CD8-positive, alpha-beta T cell (primary cell): ENCODE measurements at regions of chr19 and their contacts with region 1.

Region 1: GRCh38 chr19:18683213-18683939 is at the start of gene CRTC1:
- DNase-seq: peak; percentile 90 to 97 (median 95)
- ATAC-seq: peak; percentile 90
- H3K4me3 ChIP-seq: peak within 1 kb of the TSS; percentile 63 to 91
- H3K4me3 Mint-ChIP-seq: peak within 1 kb of the TSS; percentile 87
- H3K27ac ChIP-seq: peak within 1 kb of the TSS; percentile 65 to 67
- H3K27ac Mint-ChIP-seq: peak within 1 kb of the TSS; percentile 82
- H3K4me1 ChIP-seq: peaks cover 20% of the 10 kb centered on the region
- H3K4me1 Mint-ChIP-seq: peaks cover 33% of the 10 kb centered on the region
- H3K27me3 ChIP-seq: no peaks in the 10 kb centered on the region
- H3K27me3 Mint-ChIP-seq: no peaks in the 10 kb centered on the region
- CTCF ChIP-seq: no peak
- total RNA-seq, gene CRTC1: 7.1 to 7.5 TPM

Region 2: GRCh38 chr19:18503971-18504885 is 179.1 kb before region 1 on chr19:
- CTCF ChIA-PET with region 1: no interaction called
- POLR2A ChIA-PET with region 1: no interaction called
- intact Hi-C with region 1: no loop called
- DNase-seq: no peak
- ATAC-seq: no peak
- H3K4me3 ChIP-seq: no peak overlapping the region
- H3K4me3 Mint-ChIP-seq: no peak overlapping the region
- H3K27ac ChIP-seq: peak overlapping the region in 1 of 2 experiments; percentile 79
- H3K27ac Mint-ChIP-seq: no peak overlapping the region
- H3K4me1 ChIP-seq: peaks cover 94% of the 10 kb centered on the region
- H3K4me1 Mint-ChIP-seq: peaks cover 91% of the 10 kb centered on the region
- H3K27me3 ChIP-seq: no peaks in the 10 kb centered on the region
- H3K27me3 Mint-ChIP-seq: no peaks in the 10 kb centered on the region
- CTCF ChIP-seq: no peak

Region 3: DNA sequence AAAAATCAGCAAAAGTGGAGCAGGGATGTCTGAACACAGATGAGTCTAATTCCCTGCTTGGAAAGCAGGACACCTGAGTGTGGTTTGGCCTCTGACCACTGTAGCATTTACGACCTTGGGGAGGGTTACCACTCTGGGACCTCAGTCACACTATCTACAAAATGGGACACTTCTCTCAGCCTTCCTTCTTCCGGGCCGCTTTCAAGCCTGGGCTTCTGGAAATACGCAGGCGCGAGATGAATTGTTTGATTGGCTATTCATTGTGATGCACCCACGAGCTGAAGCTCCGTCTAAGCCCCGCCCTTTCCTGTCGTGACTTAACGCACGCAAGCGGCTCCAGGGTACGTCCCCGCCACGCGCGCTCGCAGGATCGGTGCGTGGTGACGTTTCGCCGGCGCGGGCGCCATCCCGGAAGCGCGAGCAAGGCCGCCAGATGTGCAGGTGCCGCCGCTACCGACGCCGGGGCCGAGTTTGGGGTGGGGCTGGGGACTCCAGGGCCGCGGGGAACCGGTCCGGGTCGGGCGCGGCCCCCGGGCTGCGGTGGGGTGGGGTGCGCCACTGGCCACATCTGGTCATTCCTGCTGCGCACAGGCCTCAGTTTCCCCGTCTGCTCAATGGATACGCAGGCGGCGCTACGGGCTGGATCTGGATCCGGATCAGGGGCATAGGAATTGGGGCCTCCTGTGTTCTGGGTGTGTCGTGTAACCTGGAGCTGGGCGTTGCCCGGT is 125.7 kb before region 1 on chr19 and contains the start of gene KXD1:
- CTCF ChIA-PET with region 1: no interaction called
- POLR2A ChIA-PET with region 1: no interaction called
- intact Hi-C with region 1: loop called in 1 of 2 experiments (anchors 1 kb)
- DNase-seq: peak; percentile 92 to 100 (median 97)
- ATAC-seq: peak; percentile 99
- H3K4me3 ChIP-seq: peak within 1 kb of the TSS; percentile 98 to 99
- H3K4me3 Mint-ChIP-seq: peak within 1 kb of the TSS; percentile 91
- H3K27ac ChIP-seq: peak within 1 kb of the TSS; percentile 96 to 99
- H3K27ac Mint-ChIP-seq: peak within 1 kb of the TSS; percentile 90
- H3K4me1 ChIP-seq: peaks cover 20% of the 10 kb centered on the region
- H3K4me1 Mint-ChIP-seq: peaks cover 20% of the 10 kb centered on the region
- H3K27me3 ChIP-seq: no peaks in the 10 kb centered on the region
- H3K27me3 Mint-ChIP-seq: no peaks in the 10 kb centered on the region
- CTCF ChIP-seq: no peak
- total RNA-seq, gene KXD1: 64.1 to 76.1 TPM

Region 4: GRCh38 chr19:18620916-18621315 is 62.5 kb before region 1 on chr19:
- CTCF ChIA-PET with region 1: no interaction called
- POLR2A ChIA-PET with region 1: no interaction called
- intact Hi-C with region 1: loop called in 1 of 2 experiments (anchors 2 kb)
- DNase-seq: no peak
- ATAC-seq: no peak
- H3K4me3 ChIP-seq: no peak overlapping the region
- H3K4me3 Mint-ChIP-seq: no peak overlapping the region
- H3K27ac ChIP-seq: no peak overlapping the region
- H3K27ac Mint-ChIP-seq: no peak overlapping the region
- H3K4me1 ChIP-seq: no peaks in the 10 kb centered on the region
- H3K4me1 Mint-ChIP-seq: no peaks in the 10 kb centered on the region
- H3K27me3 ChIP-seq: no peaks in the 10 kb centered on the region
- H3K27me3 Mint-ChIP-seq: peaks cover 15% of the 10 kb centered on the region
- CTCF ChIP-seq: no peak

Region 5: GRCh38 chr19:18700501-18701249 is 17.3 kb after region 1 on chr19:
- CTCF ChIA-PET with region 1: no interaction called
- POLR2A ChIA-PET with region 1: interaction called, 5 read pairs
- intact Hi-C with region 1: loop called (anchors 1 kb)
- DNase-seq: peak; percentile 47 to 84 (median 73)
- ATAC-seq: peak; percentile 97
- H3K4me3 ChIP-seq: peak overlapping the region; percentile 69 to 82
- H3K4me3 Mint-ChIP-seq: peak overlapping the region; percentile 88
- H3K27ac ChIP-seq: peak overlapping the region; percentile 73 to 75
- H3K27ac Mint-ChIP-seq: peak overlapping the region; percentile 89
- H3K4me1 ChIP-seq: peaks cover 34% of the 10 kb centered on the region
- H3K4me1 Mint-ChIP-seq: peaks cover 38% of the 10 kb centered on the region
- H3K27me3 ChIP-seq: no peaks in the 10 kb centered on the region
- H3K27me3 Mint-ChIP-seq: no peaks in the 10 kb centered on the region
- CTCF ChIP-seq: no peak